ENCODE measurements at regions of chr1 and their contacts with region 1.

Region 1: DNA sequence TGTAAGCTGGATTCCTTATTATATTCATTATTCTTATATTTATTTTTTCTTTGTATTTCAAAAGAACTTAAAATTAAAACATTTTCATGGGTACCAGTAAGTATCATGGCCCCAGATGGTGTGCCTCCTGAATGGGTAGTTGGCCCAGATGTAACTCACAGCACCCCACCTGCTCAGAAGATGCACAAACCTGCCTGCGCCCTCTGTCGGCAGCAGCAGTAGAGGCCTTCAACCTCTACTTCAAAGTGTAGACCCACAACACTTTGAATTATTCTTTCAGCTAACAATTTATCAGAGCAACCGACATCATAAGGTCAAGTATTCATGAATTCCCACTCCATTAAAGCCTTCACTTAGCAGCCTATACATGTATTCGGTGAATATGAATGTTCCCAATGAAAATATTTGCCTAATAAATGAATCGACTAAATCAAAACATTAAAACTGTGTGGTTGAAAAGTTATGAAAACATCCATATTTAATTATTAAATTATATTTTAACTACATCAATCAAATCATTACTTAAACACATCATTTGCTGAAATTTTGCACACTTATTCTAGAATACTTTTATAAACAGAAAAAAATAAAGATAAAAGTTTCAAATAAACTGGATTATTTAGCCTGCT is 25.4 kb downstream of the PIGM start:
- DNase-seq: peak; percentile 74
- H3K4me3 ChIP-seq: no peak overlapping the region
- H3K27ac ChIP-seq: no peak overlapping the region
- H3K4me1 ChIP-seq: no peaks in the 10 kb centered on the region
- H3K27me3 ChIP-seq: no peaks in the 10 kb centered on the region
- CTCF ChIP-seq: peak; percentile 96

Region 2: GRCh38 chr1:159132271-159132881 is 874.0 kb before region 1 on chr1:
- CTCF ChIA-PET with region 1: interaction called, 4 read pairs
- POLR2A ChIA-PET with region 1: no interaction called
- intact Hi-C with region 1: loop called (anchors 5 kb)
- DNase-seq: peak; percentile 73
- H3K4me3 ChIP-seq: no peak overlapping the region
- H3K27ac ChIP-seq: no peak overlapping the region
- H3K4me1 ChIP-seq: no peaks in the 10 kb centered on the region
- H3K27me3 ChIP-seq: peaks cover 61% of the 10 kb centered on the region
- CTCF ChIP-seq: peak; percentile 93

Region 3: DNA sequence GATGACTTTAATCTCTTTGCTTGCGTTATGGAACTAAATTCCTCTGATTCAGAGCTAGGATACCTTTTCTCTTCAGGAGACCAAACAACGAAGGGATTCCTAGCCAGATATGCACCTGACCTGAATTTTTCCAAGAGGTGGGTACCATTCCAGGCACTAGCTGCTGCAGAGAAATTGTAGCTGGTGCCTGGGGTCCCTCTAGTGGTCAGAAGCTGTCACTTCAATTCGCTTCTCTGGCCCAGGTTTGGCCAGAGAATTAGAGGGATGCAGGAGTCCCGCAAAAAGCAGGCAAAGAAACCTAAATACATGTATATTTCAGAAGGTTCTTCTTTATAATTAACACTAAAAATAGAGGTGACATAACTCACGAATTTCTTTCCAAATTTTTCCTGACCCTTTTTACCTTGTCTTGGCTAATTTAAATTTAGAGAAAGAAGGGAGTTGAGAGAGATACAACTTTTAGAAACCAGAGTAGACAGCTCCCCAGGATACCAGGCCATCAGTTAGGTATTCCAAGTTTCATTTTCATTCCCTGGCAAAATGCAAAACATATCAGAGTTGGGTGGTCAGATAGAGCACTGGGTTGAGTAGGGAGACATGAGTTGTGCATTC is 792.2 kb before region 1 on chr1:
- CTCF ChIA-PET with region 1: interaction called, 3 read pairs
- POLR2A ChIA-PET with region 1: no interaction called
- intact Hi-C with region 1: loop called (anchors 10 kb)
- DNase-seq: peak; percentile 49
- H3K4me3 ChIP-seq: no peak overlapping the region
- H3K27ac ChIP-seq: no peak overlapping the region
- H3K4me1 ChIP-seq: no peaks in the 10 kb centered on the region
- H3K27me3 ChIP-seq: peaks cover 51% of the 10 kb centered on the region
- CTCF ChIP-seq: peak; percentile 88

Region 4: GRCh38 chr1:159780583-159781582 is 225.5 kb before region 1 on chr1 and contains the start of gene DUSP23:
- CTCF ChIA-PET with region 1: interaction called, 4 read pairs
- POLR2A ChIA-PET with region 1: no interaction called
- intact Hi-C with region 1: loop called (anchors 5 kb)
- DNase-seq: peak; percentile 98
- H3K4me3 ChIP-seq: peak within 1 kb of the TSS; percentile 57
- H3K27ac ChIP-seq: peak within 1 kb of the TSS; percentile 26
- H3K4me1 ChIP-seq: no peaks in the 10 kb centered on the region
- H3K27me3 ChIP-seq: no peaks in the 10 kb centered on the region
- CTCF ChIP-seq: peak; percentile 95
- total RNA-seq, gene DUSP23: 27.9 and 31.0 TPM in 2 replicates

Region 5: DNA sequence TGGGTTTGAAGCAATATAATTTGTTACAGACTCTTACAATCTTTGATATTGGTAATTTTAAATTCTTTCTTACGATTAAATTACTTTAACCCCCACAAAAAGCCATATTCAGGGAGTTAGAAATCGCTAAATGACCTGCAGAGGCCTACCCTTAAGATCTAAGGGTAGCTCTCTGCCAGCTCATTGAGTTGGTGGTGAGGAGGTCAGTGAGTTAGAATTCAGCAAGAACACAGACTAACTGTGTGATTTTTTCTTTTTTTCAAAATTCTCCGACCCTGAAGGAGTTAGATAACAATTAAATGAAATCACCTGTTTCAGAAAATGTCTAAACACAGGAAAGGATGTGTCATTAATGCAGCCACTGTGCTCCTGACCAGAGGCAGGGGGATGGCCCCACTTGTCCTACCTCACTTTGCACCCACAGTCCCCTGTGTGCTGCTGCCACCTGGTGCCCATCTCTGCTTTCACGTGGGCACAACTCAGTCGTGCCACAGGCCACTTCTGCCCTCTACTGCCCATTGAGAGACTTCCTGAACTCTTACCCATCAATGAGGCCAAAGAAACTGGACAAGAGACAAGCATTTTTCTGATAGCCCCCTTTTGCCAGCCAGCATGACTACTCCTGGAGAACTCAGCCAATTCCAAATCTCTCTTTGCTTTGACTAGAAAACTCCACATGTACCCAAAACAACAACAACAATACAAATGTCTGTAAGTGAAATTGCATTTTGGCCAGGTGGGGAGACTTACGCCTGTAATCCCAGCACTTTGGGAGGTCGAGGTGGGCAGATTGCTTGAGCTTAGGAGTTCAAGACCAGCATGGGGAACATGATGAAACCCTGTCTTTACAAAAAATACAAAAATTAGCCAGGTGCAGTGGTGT is 114.9 kb before region 1 on chr1:
- CTCF ChIA-PET with region 1: interaction called, 9 read pairs
- POLR2A ChIA-PET with region 1: no interaction called
- intact Hi-C with region 1: loop called (anchors 5 kb)
- DNase-seq: peak; percentile 89
- H3K4me3 ChIP-seq: no peak overlapping the region
- H3K27ac ChIP-seq: no peak overlapping the region
- H3K4me1 ChIP-seq: peaks cover 38% of the 10 kb centered on the region
- H3K27me3 ChIP-seq: no peaks in the 10 kb centered on the region
- CTCF ChIP-seq: peak; percentile 98

Region 6: DNA sequence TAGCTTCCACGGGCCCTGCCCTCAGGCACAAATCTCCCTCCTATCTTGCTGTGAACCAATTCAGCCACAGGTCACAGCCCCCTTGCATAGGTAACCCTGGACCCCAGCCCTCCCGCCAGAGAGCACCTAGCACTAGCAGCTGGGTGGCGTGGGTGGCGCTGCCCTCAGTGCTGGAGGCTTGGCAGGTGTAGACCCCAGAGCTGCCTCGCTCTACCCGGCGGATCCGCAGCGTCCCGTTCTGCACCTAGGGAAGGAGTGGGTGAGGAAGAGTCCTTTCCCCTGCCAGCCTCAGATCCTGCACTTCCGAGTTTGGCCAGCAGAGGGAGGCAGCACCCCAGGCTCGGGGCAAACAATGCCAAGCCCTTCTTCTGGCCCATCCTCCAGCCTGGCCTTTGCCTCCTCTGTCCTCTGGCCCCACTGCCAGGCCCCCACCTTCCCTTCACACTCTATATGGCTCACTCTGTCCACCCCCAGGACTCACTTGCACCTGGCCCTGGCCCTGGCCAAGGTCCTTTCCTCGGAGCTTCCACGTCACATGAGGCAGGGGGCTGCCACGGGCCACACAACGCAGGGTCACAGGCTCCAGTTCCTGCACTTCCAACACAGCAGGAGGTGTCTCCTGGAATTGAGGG is 70.0 kb before region 1 on chr1:
- CTCF ChIA-PET with region 1: interaction called, 7 read pairs
- POLR2A ChIA-PET with region 1: no interaction called
- intact Hi-C with region 1: loop called (anchors 2 kb)
- DNase-seq: peak; percentile 70
- H3K4me3 ChIP-seq: no peak overlapping the region
- H3K27ac ChIP-seq: no peak overlapping the region
- H3K4me1 ChIP-seq: peaks cover 11% of the 10 kb centered on the region
- H3K27me3 ChIP-seq: no peaks in the 10 kb centered on the region
- CTCF ChIP-seq: peak; percentile 93

Region 7: DNA sequence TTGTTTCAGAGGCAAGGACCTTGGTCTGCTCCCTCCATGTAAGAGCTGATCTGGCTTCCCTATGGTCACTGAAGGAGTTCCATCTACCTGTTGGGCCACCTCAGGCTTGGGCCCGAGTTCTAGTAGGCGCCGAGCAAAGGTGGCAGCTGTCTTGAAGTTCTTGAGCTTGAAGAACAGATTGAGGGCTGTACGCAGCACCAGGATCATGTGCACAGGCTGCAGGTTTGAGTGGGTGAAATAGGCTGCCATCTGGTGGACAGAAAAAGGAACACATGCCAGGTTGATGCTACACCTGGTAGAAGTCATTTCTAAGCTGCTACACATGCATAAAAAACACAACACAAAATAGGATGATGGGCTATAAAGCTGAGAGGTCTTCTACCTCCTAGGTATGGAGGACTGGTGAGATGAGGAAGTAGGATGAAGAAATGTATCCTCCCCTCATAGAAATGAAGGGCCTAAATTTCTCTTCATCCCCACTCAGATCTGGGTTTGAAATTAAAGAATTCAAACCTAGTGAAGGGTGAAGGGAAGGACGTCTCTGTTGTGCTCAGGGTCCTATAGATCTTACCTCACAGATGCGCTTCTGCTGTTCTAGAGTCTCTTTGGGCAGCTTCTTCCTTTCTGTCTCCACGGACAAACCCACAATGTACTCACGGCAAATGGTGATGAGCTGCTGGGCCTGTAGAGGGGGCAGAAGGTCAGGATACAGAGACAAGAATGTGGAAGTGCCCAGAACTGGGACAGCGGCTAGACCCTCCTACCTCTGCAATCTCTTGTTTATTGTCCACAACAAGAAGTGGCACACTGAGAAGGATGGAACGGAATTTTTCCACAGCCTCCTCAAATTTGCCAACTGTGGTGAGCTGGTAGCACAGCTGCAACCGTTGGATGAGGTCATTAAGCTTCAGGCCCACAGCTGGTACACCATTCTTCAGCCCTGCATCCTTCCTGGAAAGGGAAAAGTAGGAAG is 285.1 kb after region 1 on chr1:
- CTCF ChIA-PET with region 1: no interaction called
- POLR2A ChIA-PET with region 1: no interaction called
- intact Hi-C with region 1: no loop called
- DNase-seq: peak; percentile 75
- H3K4me3 ChIP-seq: no peak overlapping the region
- H3K27ac ChIP-seq: no peak overlapping the region
- H3K4me1 ChIP-seq: no peaks in the 10 kb centered on the region
- H3K27me3 ChIP-seq: no peaks in the 10 kb centered on the region
- CTCF ChIP-seq: peak; percentile 88